ENCODE measurements at regions of chrX and their contacts with region 1.

Region 1: GRCh38 chrX:15335135-15336022 is at the start of gene PIGA:
- DNase-seq: peak; percentile 71 to 95 (median 91)
- ATAC-seq: peak; percentile 92
- H3K4me3 ChIP-seq: peak within 1 kb of the TSS; percentile 92
- H3K4me3 Mint-ChIP-seq: peak within 1 kb of the TSS; percentile 87 to 93 (median 90)
- H3K27ac ChIP-seq: peak within 1 kb of the TSS; percentile 84
- H3K27ac Mint-ChIP-seq: peak within 1 kb of the TSS; percentile 75 to 96 (median 93)
- H3K4me1 ChIP-seq: peaks cover 0 to 6% of the 10 kb centered on the region in 2 donors
- H3K4me1 Mint-ChIP-seq: peaks cover 0 to 20% (median 18%) of the 10 kb centered on the region in 7 donors
- H3K27me3 ChIP-seq: no peaks in the 10 kb centered on the region
- H3K27me3 Mint-ChIP-seq: peaks cover 0 to 15% (median 9%) of the 10 kb centered on the region in 5 donors
- total RNA-seq, gene PIGA: 23.8 to 102 (median 27.8) TPM

Region 2: DNA sequence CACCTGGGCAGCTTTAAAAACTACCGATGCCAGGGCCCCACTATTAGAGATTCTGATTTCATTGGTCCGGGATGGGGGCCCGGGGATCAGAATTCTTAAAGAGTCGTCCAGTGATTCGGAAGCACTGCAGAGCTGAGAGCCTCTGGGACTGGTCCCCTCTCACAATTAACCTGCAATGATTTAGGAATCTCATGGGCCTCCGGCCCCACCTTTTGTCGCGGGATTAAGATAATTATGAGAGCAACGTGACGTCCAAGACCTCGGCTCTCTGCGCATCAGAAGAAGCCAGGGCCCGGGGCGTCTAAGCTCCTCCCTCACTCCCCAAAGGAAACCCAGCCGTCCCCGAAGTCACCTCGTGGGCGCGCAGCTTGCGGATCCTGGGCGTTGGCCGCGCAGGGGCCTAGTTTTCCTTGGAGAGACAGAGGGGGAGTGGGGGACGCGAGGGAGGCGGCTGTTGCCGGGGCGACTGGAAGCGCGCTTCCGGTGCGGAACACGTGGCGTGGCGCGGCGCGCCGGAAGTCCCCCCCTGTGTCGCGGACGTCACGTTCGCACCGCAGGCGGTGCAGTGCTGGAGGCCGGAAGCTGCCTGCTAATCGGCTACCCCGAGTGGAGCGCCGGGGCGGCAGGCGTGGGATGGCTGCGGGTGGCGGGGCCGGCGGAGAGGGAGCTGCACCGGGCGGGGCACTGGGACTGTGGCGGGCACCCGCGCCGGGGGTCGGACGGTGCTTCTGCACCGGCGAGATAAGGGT is 1305.8 kb before region 1 on chrX and contains the start of gene GEMIN8:
- CTCF ChIA-PET with region 1: no interaction called
- POLR2A ChIA-PET with region 1: no interaction called
- intact Hi-C with region 1: loop called (anchors 2 kb)
- DNase-seq: peak; percentile 72 to 93 (median 87)
- ATAC-seq: peak; percentile 97
- H3K4me3 ChIP-seq: peak within 1 kb of the TSS; percentile 60
- H3K4me3 Mint-ChIP-seq: peak within 1 kb of the TSS; percentile 80 to 100 (median 94)
- H3K27ac ChIP-seq: peak within 1 kb of the TSS; percentile 90
- H3K27ac Mint-ChIP-seq: peak within 1 kb of the TSS; percentile 91 to 100 (median 96)
- H3K4me1 ChIP-seq: peaks cover 19 to 26% of the 10 kb centered on the region in 2 donors
- H3K4me1 Mint-ChIP-seq: peaks cover 9 to 51% (median 41%) of the 10 kb centered on the region in 7 donors
- H3K27me3 ChIP-seq: no peaks in the 10 kb centered on the region
- H3K27me3 Mint-ChIP-seq: peaks cover 0 to 1% (median 0%) of the 10 kb centered on the region in 5 donors
- total RNA-seq, gene GEMIN8: 9.7 to 20.4 (median 11.7) TPM

Region 3: DNA sequence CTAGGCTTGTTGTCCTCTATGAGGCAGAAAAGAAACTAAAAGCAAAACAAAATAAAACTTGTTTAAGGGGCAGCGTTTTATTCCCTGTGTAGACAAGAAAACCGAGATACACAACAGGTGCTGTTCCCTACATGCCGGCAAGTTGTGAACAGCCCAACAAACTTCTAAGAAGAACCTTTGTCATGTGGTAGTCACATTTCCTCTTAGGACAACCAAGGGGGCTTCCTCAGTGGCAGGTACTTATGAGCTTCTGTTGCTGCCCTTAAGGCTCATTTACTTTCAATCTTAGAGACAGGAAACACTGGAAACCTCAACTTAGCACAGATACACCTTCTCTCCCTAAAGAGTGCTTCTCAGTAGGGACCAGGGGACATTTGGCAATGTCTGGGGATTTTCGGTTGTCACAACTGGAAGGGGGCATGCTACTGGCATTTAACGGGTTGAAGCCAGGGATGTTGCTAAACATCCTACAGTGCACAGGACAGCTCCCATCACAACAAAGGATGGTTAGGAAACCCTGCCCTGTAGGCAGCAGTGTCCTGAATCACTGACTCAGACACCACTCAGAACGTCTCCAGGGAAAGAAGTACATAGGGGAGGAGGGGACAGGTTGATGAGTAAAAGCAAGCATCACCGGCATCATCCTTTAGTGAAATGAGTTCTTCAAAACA is 176.5 kb before region 1 on chrX:
- CTCF ChIA-PET with region 1: no interaction called
- POLR2A ChIA-PET with region 1: no interaction called
- intact Hi-C with region 1: loop called in 1 of 2 experiments (anchors 5 kb)
- DNase-seq: peak in 5 of 9 donors; percentile 16 to 36 (median 21)
- ATAC-seq: peak; percentile 57
- H3K4me3 ChIP-seq: peak overlapping the region; percentile 36
- H3K4me3 Mint-ChIP-seq: peak overlapping the region; percentile 52 to 91 (median 82)
- H3K27ac ChIP-seq: no peak overlapping the region
- H3K27ac Mint-ChIP-seq: peak overlapping the region; percentile 72 to 98 (median 92)
- H3K4me1 ChIP-seq: peaks cover 7 to 17% of the 10 kb centered on the region in 2 donors
- H3K4me1 Mint-ChIP-seq: peaks cover 3 to 52% (median 39%) of the 10 kb centered on the region in 7 donors
- H3K27me3 ChIP-seq: no peaks in the 10 kb centered on the region
- H3K27me3 Mint-ChIP-seq: no peaks in the 10 kb centered on the region

Region 4: DNA sequence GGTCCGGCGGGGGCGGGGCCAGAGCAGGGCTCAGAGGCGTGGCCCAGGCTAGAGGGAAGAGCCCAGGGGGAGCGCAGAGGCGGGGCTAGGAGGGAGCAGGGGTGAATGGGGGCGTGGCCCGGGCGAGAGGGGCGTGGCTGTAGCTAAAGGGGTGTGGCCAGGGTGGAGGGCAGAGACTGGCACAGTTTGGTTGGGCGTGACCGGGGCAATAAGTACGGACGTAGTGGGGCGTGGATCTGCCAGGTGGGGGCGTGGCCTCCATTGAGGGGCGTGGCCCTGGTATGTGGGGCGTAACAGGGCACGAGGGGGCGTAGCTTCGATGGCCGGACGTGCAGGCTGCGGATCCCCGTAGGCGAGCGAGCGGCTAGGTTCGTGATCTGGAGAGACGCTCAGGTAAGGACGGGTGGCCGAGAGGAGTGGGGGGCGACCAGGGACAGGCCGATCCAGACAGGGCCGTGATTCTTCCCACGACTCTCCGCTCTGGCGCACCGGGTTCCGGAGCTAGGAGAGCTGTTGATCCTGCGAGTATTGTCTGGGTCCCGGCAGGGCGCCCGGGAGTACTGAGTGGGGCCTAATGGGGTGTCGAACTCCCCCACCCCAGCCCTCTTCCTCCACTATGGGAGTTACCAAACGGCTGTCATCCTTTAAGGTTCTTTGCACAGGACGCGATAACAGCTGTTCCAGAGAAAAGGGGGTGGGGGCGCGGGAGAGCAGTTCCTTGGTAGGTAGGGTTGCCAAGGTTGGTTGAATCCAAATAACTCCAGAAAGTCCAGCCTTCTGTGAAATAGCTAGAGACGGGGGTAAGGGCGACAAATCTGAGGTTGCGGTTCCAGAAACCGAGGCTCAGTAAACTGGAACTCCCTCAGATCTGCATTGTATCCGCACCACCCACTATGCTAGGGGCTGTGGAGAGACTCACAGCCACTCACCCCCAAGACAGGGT is 402.9 kb after region 1 on chrX and contains the start of gene CA5B:
- CTCF ChIA-PET with region 1: no interaction called
- POLR2A ChIA-PET with region 1: interaction called, 3 read pairs
- intact Hi-C with region 1: loop called (anchors 1 to 10 kb)
- DNase-seq: peak; percentile 93 to 100 (median 98)
- ATAC-seq: peak; percentile 98
- H3K4me3 ChIP-seq: peak within 1 kb of the TSS; percentile 82
- H3K4me3 Mint-ChIP-seq: peak within 1 kb of the TSS; percentile 89 to 99 (median 94)
- H3K27ac ChIP-seq: peak within 1 kb of the TSS; percentile 72
- H3K27ac Mint-ChIP-seq: peak within 1 kb of the TSS; percentile 71 to 95 (median 91)
- H3K4me1 ChIP-seq: peaks cover 16 to 19% of the 10 kb centered on the region in 2 donors
- H3K4me1 Mint-ChIP-seq: peaks cover 18 to 60% (median 43%) of the 10 kb centered on the region in 7 donors
- H3K27me3 ChIP-seq: no peaks in the 10 kb centered on the region
- H3K27me3 Mint-ChIP-seq: peaks cover 0 to 2% (median 0%) of the 10 kb centered on the region in 5 donors
- total RNA-seq, gene CA5B: 16.4 to 64.6 (median 39.5) TPM

Region 5: DNA sequence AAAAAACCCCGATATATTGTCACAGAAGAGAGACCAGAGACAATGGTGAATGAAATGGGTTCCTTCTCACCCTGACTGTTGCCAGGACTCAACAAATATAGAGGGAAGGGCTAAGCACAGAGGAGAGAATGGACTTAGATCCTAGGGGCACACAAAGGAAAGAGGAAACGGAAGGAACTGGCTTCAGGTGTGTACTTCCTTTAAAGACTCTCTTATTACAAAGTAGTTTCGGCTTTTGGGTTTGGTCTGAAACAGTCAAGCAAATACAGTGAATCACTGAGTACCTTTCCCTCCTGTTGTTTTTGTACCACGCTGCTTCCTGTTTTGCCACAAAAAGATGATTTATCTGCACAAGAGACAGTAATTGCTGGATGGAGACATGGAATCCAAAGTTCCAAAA is 1268.4 kb after region 1 on chrX:
- CTCF ChIA-PET with region 1: no interaction called
- POLR2A ChIA-PET with region 1: no interaction called
- intact Hi-C with region 1: loop called in 1 of 2 experiments (anchors 10 kb)
- DNase-seq: peak in 5 of 9 donors; percentile 4 to 33 (median 21)
- ATAC-seq: no peak
- H3K4me3 ChIP-seq: no peak overlapping the region
- H3K4me3 Mint-ChIP-seq: peak overlapping the region; percentile 23 to 86 (median 76)
- H3K27ac ChIP-seq: peak overlapping the region; percentile 58
- H3K27ac Mint-ChIP-seq: peak overlapping the region; percentile 79 to 96 (median 93)
- H3K4me1 ChIP-seq: peaks cover 0 to 32% of the 10 kb centered on the region in 2 donors
- H3K4me1 Mint-ChIP-seq: peaks cover 4 to 54% (median 39%) of the 10 kb centered on the region in 7 donors
- H3K27me3 ChIP-seq: no peaks in the 10 kb centered on the region
- H3K27me3 Mint-ChIP-seq: no peaks in the 10 kb centered on the region

Region 6: DNA sequence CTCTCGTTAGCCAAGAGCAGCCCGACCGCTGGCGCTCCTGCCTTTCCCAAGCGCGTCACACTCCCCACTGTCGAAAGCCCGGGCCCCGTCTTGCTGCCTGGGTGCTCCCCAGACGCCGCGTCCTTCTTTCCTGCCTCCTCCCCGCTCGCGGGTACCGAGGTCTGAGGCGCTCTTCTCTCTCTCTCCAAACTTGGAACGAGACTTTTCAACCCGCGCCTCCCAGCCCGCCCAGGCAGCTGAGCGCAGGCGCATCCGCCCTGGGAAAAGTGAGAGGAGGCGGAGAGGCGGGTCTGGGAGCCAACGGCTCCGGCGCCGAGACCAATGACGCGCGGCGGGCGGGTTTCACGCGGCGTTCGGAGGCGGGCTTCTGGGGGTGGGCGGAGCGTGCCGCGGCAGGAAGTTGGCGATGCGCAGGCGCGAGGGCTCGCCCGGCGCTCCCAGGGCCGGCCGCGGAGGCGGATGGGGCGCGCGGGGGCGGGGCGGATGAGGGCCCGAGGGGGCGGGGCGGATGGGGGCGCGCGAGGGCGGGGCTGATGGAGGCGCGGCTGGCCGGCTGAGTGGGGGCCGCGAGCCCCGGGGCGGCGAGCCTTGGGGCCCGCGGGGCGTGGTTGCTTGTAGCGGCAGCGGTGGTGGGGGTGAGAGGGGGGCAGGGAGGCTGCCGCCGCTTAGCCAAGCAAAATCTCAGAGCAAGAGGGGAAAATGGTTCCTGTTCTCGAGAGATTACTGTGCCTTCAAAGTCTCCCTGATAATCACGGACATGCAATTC is 1534.9 kb after region 1 on chrX and contains the start of gene RBBP7:
- CTCF ChIA-PET with region 1: no interaction called
- POLR2A ChIA-PET with region 1: no interaction called
- intact Hi-C with region 1: loop called in 1 of 2 experiments (anchors 10 kb)
- DNase-seq: peak; percentile 88 to 98 (median 94)
- ATAC-seq: peak; percentile 91
- H3K4me3 ChIP-seq: peak within 1 kb of the TSS; percentile 69
- H3K4me3 Mint-ChIP-seq: peak within 1 kb of the TSS; percentile 93 to 99 (median 96)
- H3K27ac ChIP-seq: peak within 1 kb of the TSS; percentile 96
- H3K27ac Mint-ChIP-seq: peak within 1 kb of the TSS; percentile 89 to 98 (median 97)
- H3K4me1 ChIP-seq: peaks cover 0 to 23% of the 10 kb centered on the region in 2 donors
- H3K4me1 Mint-ChIP-seq: peaks cover 7 to 50% (median 39%) of the 10 kb centered on the region in 7 donors
- H3K27me3 ChIP-seq: no peaks in the 10 kb centered on the region
- H3K27me3 Mint-ChIP-seq: peaks cover 0 to 9% (median 0%) of the 10 kb centered on the region in 5 donors
- total RNA-seq, gene RBBP7: 82.9 to 112 (median 94.6) TPM

Measured in naive thymus-derived CD4-positive, alpha-beta T cell (primary cell).